Heart left ventricle (tissue), 16 donors: ENCODE measurements at regions of chr2 and their contacts with region 1.

Region 1: DNA sequence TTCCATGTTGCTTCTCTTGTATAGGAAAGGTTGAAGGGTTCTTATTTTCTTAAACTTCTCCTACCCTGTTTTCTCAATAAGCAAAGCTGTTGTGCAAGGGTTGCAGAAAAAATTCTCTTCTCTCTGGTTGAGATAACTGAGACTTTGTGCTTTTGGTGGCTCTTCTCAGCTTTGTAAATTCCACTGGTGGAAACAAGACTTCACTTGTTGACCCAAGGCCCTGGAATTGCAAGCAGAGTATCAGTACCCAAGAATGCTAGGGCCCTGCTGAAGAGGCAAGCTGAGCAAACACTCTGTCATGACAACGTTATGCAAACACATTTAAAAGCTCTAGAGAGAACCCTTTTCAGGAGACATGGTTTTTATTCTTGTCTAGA is 294.7 kb upstream of the EPAS1 start:
- DNase-seq: no peak
- ATAC-seq: peak in 3 of 4 donors; percentile 17 to 63 (median 36)
- H3K4me3 ChIP-seq: no peak overlapping the region
- H3K27ac ChIP-seq: peak overlapping the region in 8 of 12 donors; percentile 16 to 62 (median 44)
- H3K4me1 ChIP-seq: peaks cover 0 to 27% (median 11%) of the 10 kb centered on the region in 12 donors
- H3K27me3 ChIP-seq: no peaks in the 10 kb centered on the region
- CTCF ChIP-seq: no peak
- POLR2A ChIP-seq: no peak

Region 2: DNA sequence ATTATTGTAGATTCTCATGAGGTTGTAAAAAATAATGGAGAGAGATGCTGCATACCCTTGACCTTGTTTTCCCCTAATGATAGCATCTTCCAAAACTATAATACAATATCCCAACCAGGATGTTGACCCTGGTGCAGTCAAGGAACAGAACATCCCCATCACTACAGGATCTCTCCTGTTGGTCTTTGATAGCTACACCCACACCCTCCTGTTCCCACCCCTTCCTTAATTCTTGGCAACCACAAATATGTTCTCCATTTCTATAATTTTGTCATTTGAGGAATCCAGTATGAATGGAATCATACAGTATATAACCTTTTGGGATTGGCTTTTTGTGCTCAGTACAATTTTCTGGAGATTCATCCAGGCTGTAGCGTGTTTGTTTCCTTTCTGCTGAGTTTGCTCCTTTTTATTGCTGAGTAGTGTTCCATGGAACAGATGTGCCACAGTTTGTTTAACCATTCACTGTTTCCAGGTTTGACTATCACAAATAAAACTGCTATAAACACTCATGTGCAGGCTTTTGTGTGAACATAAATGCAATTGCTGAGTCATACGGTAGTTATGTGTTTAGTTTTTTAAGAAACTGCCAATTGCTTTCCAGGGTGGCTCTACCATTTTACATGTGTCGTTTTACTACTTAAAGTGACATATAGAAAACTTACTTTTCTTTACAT is 890.9 kb after region 1 on chr2:
- intact Hi-C with region 1: loop called in 2 of 10 experiments (anchors 10 kb)
- DNase-seq: no peak
- ATAC-seq: peak in 1 of 4 donors; percentile 40
- H3K4me3 ChIP-seq: no peak overlapping the region
- H3K27ac ChIP-seq: no peak overlapping the region
- H3K4me1 ChIP-seq: peaks cover 0 to 7% (median 1%) of the 10 kb centered on the region in 12 donors
- H3K27me3 ChIP-seq: no peaks in the 10 kb centered on the region
- CTCF ChIP-seq: no peak
- POLR2A ChIP-seq: no peak